Activated naive CD8-positive, alpha-beta T cell treated with anti-CD3 and anti-CD28 coated beads, Interleukin-2, amount 10 ng/mL, durations not matched to agents 7 days and 5 days (primary cell): ENCODE measurements at regions of chr11 and their contacts with region 1.

Region 1: DNA sequence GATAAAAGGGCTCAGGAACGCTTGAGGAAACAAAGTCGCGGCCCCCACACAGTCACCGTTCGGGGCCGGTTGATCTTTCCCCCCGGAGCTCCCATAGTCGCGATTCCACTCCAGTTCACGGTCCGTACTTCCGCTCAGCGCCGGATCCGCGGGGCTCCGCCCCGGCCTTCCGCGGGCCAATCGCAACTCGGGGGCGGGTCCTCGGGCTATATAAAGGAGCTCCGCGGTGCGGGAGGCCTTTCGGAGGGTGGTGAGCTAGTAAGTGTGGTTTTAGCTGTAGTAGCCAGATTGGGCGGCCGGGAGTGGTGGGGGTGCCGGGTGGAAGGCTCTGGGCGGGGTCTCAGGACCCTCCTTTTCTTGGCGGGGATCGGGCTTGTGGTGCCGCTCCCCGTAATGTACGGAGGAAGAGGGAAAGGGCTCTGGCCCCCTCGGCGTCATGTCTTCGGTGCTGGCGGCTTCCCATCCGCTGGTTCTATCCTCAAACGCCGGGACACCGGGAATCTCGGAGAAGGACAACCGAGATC is at the starts of genes C11orf98 and CSKMT:
- DNase-seq: peak; percentile 97
- ATAC-seq: peak; percentile 88
- H3K4me3 Mint-ChIP-seq: peak within 1 kb of the TSS; percentile 97
- H3K27ac Mint-ChIP-seq: peak within 1 kb of the TSS; percentile 94
- H3K4me1 Mint-ChIP-seq: peaks cover 34% of the 10 kb centered on the region
- H3K27me3 Mint-ChIP-seq: no peaks in the 10 kb centered on the region
- total RNA-seq, gene C11orf98: 99.9 to 104 TPM
- total RNA-seq, gene CSKMT: 23.3 to 27.3 TPM

Region 2: GRCh38 chr11:62556108-62556871 is 108.8 kb before region 1 on chr11:
- POLR2A ChIA-PET with region 1: interaction called, 12 read pairs
- DNase-seq: peak; percentile 87
- ATAC-seq: peak; percentile 79
- H3K4me3 Mint-ChIP-seq: peak overlapping the region; percentile 79
- H3K27ac Mint-ChIP-seq: peak overlapping the region; percentile 97
- H3K4me1 Mint-ChIP-seq: peaks cover 82% of the 10 kb centered on the region
- H3K27me3 Mint-ChIP-seq: no peaks in the 10 kb centered on the region

Region 3: GRCh38 chr11:62601394-62602140 is 63.6 kb before region 1 on chr11 and contains the start of gene MTA2:
- POLR2A ChIA-PET with region 1: interaction called, 49 read pairs
- DNase-seq: peak; percentile 99
- ATAC-seq: peak; percentile 89
- H3K4me3 Mint-ChIP-seq: peak within 1 kb of the TSS; percentile 87
- H3K27ac Mint-ChIP-seq: peak within 1 kb of the TSS; percentile 88
- H3K4me1 Mint-ChIP-seq: peaks cover 34% of the 10 kb centered on the region
- H3K27me3 Mint-ChIP-seq: no peaks in the 10 kb centered on the region
- total RNA-seq, gene MTA2: 231 to 233 TPM

Region 4: GRCh38 chr11:62627714-62628113 is 37.4 kb before region 1 on chr11:
- POLR2A ChIA-PET with region 1: interaction called, 45 read pairs
- DNase-seq: no peak
- ATAC-seq: peak; percentile 40
- H3K4me3 Mint-ChIP-seq: no peak overlapping the region
- H3K27ac Mint-ChIP-seq: peak overlapping the region; percentile 66
- H3K4me1 Mint-ChIP-seq: peaks cover 4% of the 10 kb centered on the region
- H3K27me3 Mint-ChIP-seq: no peaks in the 10 kb centered on the region

Region 5: GRCh38 chr11:62678770-62679696 is 13.9 kb after region 1 on chr11 and contains the start of gene UBXN1:
- POLR2A ChIA-PET with region 1: interaction called, 25 read pairs
- DNase-seq: peak; percentile 82
- ATAC-seq: peak; percentile 79
- H3K4me3 Mint-ChIP-seq: peak within 1 kb of the TSS; percentile 85
- H3K27ac Mint-ChIP-seq: peak within 1 kb of the TSS; percentile 88
- H3K4me1 Mint-ChIP-seq: peaks cover 20% of the 10 kb centered on the region
- H3K27me3 Mint-ChIP-seq: no peaks in the 10 kb centered on the region
- total RNA-seq, gene UBXN1: 135 to 136 TPM

Region 6: GRCh38 chr11:62753736-62754603 is 88.8 kb after region 1 on chr11 and contains the start of gene ZBTB3:
- POLR2A ChIA-PET with region 1: interaction called, 15 read pairs
- DNase-seq: peak; percentile 95
- ATAC-seq: peak; percentile 99
- H3K4me3 Mint-ChIP-seq: peak within 1 kb of the TSS; percentile 96
- H3K27ac Mint-ChIP-seq: peak within 1 kb of the TSS; percentile 98
- H3K4me1 Mint-ChIP-seq: peaks cover 26% of the 10 kb centered on the region
- H3K27me3 Mint-ChIP-seq: peaks cover 4% of the 10 kb centered on the region
- total RNA-seq, gene ZBTB3: 14.0 to 17.1 TPM

Region 7: GRCh38 chr11:62778441-62778840 is 113.3 kb after region 1 on chr11:
- POLR2A ChIA-PET with region 1: no interaction called
- DNase-seq: no peak
- ATAC-seq: no peak
- H3K4me3 Mint-ChIP-seq: no peak overlapping the region
- H3K27ac Mint-ChIP-seq: peak overlapping the region; percentile 49
- H3K4me1 Mint-ChIP-seq: peaks cover 9% of the 10 kb centered on the region
- H3K27me3 Mint-ChIP-seq: no peaks in the 10 kb centered on the region